Astrocyte of the spinal cord (primary cell): ENCODE measurements at regions of chr20 and their contacts with region 1.

Region 1: DNA sequence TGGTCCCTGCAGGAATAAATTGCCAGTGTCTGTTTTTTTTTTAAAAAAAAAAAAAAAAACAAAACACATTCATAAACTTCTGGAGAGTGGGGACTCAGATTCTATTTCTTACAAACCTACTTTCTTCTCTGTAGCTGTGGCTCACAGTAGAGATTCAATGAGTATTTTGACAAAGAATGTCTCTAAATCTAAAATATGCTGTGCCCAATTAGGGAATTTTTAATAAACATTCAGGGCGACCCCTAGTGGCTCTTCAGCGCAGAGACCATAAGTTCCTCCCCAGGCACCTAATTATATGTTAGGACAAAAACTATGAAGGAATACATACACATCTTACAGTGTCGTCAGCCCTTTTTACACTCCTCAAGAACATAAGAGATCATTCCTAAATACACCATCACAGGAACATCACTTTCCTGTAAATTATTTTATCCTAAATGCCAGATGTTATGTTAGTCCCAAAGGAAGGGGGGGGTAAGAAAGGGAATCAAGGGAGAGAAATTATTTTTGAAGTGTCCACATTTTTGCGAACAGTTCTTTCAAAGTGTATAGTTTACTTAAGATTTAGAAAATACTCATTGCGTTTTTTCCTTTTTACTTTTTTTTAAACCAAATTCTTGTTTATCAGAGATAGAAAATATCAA is 21.8 kb upstream of the NAA20 start:
- DNase-seq: peak; percentile 74
- H3K4me3 ChIP-seq: no peak overlapping the region
- CTCF ChIP-seq: peak; percentile 75

Region 2: GRCh38 chr20:19815553-19815991 is 179.8 kb before region 1 on chr20:
- in situ Hi-C with region 1: loop called (anchors 25 kb)
- DNase-seq: peak; percentile 99
- H3K4me3 ChIP-seq: no peak overlapping the region
- CTCF ChIP-seq: no peak

Region 3: GRCh38 chr20:19889011-19889953 is 106.1 kb before region 1 on chr20:
- in situ Hi-C with region 1: loop called (anchors 25 kb)
- DNase-seq: peak; percentile 89
- H3K4me3 ChIP-seq: peak overlapping the region; percentile 30
- CTCF ChIP-seq: no peak